ENCODE measurements at regions of chr15 and their contacts with region 1.

Region 1: GRCh38 chr15:84734794-84735479 is 13.5 kb upstream of the ZNF592 start:
- DNase-seq: peak; percentile 65
- ATAC-seq: peak; percentile 80
- H3K4me3 Mint-ChIP-seq: peak overlapping the region; percentile 88
- H3K27ac Mint-ChIP-seq: peak overlapping the region; percentile 93
- H3K4me1 Mint-ChIP-seq: peaks cover 39% of the 10 kb centered on the region
- H3K27me3 Mint-ChIP-seq: no peaks in the 10 kb centered on the region

Region 2: DNA sequence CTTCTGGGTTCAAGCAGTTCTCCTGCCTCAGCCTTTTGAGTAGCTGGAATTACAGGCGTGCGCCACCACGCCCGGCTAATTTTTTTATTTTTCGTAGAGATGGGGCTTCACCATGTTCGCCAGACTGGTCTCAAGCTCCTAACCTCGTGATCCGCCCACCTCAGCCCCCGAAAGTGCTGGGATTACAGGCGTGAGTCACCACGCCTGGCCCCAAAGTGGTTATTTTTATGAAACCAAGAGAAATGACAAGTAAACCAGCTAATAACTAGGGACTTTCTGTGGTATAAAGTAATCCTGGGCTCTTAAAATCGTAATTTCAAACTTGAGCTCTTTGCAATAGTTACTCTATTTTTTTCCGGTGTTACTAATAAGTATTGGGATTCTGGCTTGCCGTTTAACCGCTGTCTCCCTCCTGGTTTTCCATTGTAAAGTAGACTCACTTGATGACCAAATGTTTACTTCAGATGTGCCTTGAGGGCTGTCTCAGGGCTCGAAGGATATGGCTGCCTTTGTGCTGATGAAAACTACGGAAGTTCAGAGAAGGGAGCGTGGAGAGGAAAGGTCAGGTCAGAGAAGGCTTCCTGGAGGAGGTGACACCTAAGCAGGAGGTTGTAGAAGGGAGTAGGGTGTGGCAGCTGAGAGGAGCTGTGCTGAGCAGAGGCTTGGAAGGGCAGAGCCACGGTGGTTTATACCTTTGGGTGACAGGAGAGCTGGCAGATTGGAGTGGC is 129.9 kb before region 1 on chr15:
- POLR2A ChIA-PET with region 1: no interaction called
- DNase-seq: no peak
- ATAC-seq: no peak
- H3K4me3 Mint-ChIP-seq: peak overlapping the region; percentile 29
- H3K27ac Mint-ChIP-seq: peak overlapping the region; percentile 47
- H3K4me1 Mint-ChIP-seq: peaks cover 23% of the 10 kb centered on the region
- H3K27me3 Mint-ChIP-seq: no peaks in the 10 kb centered on the region

Region 3: DNA sequence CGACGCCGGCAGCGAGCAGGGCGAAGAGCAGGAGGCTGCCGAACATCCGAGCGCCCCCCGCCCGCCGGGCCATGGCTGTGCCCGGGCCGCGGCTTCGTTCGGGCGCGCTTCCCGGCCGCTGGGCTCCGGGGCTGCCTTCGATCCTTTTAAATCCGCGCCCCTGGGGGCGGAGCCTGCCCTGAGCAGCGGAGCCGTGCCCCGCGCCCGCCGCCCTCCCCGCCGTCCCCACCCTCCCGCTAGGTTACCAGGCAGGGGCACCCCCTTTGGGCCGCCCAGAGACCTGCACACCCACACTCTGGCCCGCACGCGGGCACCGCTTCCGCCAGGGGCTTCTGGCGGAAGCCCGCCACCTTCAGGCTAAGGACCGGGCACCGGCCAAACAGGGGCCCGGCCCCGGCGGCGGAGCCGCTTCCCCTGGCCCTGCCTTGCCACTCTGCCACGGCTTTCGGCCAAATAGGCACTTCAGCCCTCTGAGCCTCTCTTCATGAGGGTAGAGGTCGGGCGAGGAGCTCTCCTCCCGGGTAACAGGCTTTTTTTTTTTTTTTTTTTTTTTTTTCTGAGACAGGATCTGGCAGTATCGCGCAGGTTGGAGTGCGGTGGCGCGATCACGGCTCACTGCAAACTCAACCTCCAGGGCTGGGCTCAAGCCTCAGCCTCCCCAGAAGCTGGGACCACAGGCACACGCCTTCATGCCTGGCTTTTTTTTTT is 76.7 kb before region 1 on chr15 and contains the start of gene NMB:
- POLR2A ChIA-PET with region 1: interaction called, 17 read pairs
- DNase-seq: peak; percentile 86
- ATAC-seq: peak; percentile 71
- H3K4me3 Mint-ChIP-seq: peak within 1 kb of the TSS; percentile 80
- H3K27ac Mint-ChIP-seq: peak within 1 kb of the TSS; percentile 73
- H3K4me1 Mint-ChIP-seq: peaks cover 14% of the 10 kb centered on the region
- H3K27me3 Mint-ChIP-seq: no peaks in the 10 kb centered on the region
- total RNA-seq, gene NMB: 1.1 to 1.7 TPM

Region 4: GRCh38 chr15:84716036-84716799 is 18.7 kb before region 1 on chr15 and contains the start of gene SEC11A:
- POLR2A ChIA-PET with region 1: interaction called, 130 read pairs
- DNase-seq: peak; percentile 93
- ATAC-seq: peak; percentile 93
- H3K4me3 Mint-ChIP-seq: peak within 1 kb of the TSS; percentile 99
- H3K27ac Mint-ChIP-seq: peak within 1 kb of the TSS; percentile 100
- H3K4me1 Mint-ChIP-seq: peaks cover 42% of the 10 kb centered on the region
- H3K27me3 Mint-ChIP-seq: no peaks in the 10 kb centered on the region
- total RNA-seq, gene SEC11A: 97.1 to 99.1 TPM

Region 5: GRCh38 chr15:84748274-84749110 is 13.6 kb after region 1 on chr15 and contains the start of gene ZNF592:
- POLR2A ChIA-PET with region 1: interaction called, 37 read pairs
- DNase-seq: peak; percentile 91
- ATAC-seq: peak; percentile 62
- H3K4me3 Mint-ChIP-seq: peak within 1 kb of the TSS; percentile 97
- H3K27ac Mint-ChIP-seq: peak within 1 kb of the TSS; percentile 96
- H3K4me1 Mint-ChIP-seq: peaks cover 53% of the 10 kb centered on the region
- H3K27me3 Mint-ChIP-seq: no peaks in the 10 kb centered on the region
- total RNA-seq, gene ZNF592: 35.6 TPM

Region 6: DNA sequence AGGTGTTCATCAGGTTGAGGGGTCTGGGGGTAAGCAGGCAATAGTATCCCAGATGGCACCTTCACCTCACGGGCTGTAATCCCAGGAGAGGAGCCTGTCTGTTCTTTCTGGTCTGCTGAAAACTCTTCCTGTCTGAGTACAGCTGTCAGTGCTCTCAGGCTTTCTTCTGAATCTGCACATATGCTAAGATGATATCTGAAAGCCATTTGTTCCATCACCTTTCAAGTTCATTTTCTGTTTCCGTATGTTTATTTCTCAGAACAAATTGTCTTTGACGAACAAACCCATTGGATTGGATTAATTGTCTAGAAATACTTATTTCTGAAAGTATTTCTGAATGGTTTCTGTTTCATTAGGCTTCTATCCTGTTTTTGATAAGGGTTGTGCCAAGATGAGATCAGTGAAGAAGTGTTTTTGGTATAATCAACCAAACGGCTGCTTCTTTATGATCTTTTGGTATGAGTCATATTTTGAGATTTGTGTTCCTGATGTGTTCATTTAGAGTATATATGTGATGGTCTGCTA is 26.7 kb after region 1 on chr15:
- POLR2A ChIA-PET with region 1: no interaction called
- DNase-seq: no peak
- ATAC-seq: peak; percentile 63
- H3K4me3 Mint-ChIP-seq: no peak overlapping the region
- H3K27ac Mint-ChIP-seq: no peak overlapping the region
- H3K4me1 Mint-ChIP-seq: peaks cover 16% of the 10 kb centered on the region
- H3K27me3 Mint-ChIP-seq: no peaks in the 10 kb centered on the region